Right lobe of liver (tissue), 6 donors: ENCODE measurements at regions of chr3 and their contacts with region 1.

Region 1: GRCh38 chr3:149473357-149474249 is 894 bp upstream of the TM4SF4 start:
- DNase-seq: peak in 1 of 3 donors; percentile 31
- ATAC-seq: peak; percentile 55 to 62 (median 58)
- H3K4me3 ChIP-seq: peak overlapping the region in 1 of 3 donors; percentile 5
- H3K27ac ChIP-seq: peak overlapping the region; percentile 73 to 98 (median 93)
- H3K4me1 ChIP-seq: peaks cover 0 to 34% (median 12%) of the 10 kb centered on the region in 4 donors
- H3K27me3 ChIP-seq: no peaks in the 10 kb centered on the region
- CTCF ChIP-seq: no peak
- POLR2A ChIP-seq: peak; percentile 11

Region 2: DNA sequence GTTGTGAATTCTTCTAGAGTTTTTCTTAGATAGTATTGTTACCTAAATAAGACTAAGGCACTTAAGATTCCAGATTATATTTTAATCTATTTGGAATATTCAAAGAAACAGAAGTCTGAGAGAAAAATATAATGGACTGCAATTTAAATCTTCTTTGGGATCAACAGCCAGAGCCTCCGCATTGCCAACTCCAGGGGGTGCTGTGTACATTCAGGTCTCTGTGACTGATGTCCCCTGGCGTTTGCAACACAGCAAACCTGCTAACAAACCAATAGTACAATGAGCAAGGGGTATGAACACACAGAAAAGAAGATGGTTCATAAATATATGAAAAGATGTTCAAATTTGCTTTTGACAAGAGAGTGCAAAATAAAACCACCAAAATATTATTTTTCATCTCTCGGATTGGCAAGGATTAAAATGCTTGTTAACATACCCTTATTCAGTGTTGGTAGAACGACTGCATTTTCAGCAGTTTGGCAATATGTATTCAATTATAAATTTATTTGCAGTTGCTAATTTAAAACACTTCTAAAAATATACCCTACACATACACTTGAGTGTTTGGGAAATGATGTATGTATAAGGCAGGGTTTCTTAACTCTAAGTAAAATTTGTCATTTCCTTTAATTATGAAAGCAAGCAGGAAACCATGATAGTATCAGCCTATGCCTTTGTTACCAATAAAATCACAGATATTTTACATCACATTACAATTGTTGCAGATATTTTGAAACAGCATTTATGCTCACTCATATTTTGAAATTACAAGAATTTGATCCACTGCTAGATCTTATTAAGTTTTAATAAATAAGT is 80.0 kb before region 1 on chr3:
- intact Hi-C with region 1: loop called in 1 of 2 experiments (anchors 10 kb)
- DNase-seq: peak; percentile 76 to 86 (median 82)
- ATAC-seq: peak; percentile 68 to 86 (median 79)
- H3K4me3 ChIP-seq: no peak overlapping the region
- H3K27ac ChIP-seq: peak overlapping the region; percentile 11 to 85 (median 50)
- H3K4me1 ChIP-seq: peaks cover 0 to 54% (median 14%) of the 10 kb centered on the region in 4 donors
- H3K27me3 ChIP-seq: no peaks in the 10 kb centered on the region
- CTCF ChIP-seq: peak; percentile 86 to 90 (median 86)
- POLR2A ChIP-seq: no peak

Region 3: GRCh38 chr3:149401215-149401925 is 72.2 kb before region 1 on chr3:
- intact Hi-C with region 1: loop called (anchors 5 to 10 kb)
- DNase-seq: peak in 2 of 3 donors; percentile 61 to 73
- ATAC-seq: peak; percentile 87 to 96 (median 90)
- H3K4me3 ChIP-seq: no peak overlapping the region
- H3K27ac ChIP-seq: peak overlapping the region; percentile 63 to 86 (median 85)
- H3K4me1 ChIP-seq: peaks cover 0 to 48% (median 12%) of the 10 kb centered on the region in 4 donors
- H3K27me3 ChIP-seq: no peaks in the 10 kb centered on the region
- CTCF ChIP-seq: no peak
- POLR2A ChIP-seq: peak; percentile 47